ENCODE measurements at regions of chr20 and their contacts with region 1.

Region 1: DNA sequence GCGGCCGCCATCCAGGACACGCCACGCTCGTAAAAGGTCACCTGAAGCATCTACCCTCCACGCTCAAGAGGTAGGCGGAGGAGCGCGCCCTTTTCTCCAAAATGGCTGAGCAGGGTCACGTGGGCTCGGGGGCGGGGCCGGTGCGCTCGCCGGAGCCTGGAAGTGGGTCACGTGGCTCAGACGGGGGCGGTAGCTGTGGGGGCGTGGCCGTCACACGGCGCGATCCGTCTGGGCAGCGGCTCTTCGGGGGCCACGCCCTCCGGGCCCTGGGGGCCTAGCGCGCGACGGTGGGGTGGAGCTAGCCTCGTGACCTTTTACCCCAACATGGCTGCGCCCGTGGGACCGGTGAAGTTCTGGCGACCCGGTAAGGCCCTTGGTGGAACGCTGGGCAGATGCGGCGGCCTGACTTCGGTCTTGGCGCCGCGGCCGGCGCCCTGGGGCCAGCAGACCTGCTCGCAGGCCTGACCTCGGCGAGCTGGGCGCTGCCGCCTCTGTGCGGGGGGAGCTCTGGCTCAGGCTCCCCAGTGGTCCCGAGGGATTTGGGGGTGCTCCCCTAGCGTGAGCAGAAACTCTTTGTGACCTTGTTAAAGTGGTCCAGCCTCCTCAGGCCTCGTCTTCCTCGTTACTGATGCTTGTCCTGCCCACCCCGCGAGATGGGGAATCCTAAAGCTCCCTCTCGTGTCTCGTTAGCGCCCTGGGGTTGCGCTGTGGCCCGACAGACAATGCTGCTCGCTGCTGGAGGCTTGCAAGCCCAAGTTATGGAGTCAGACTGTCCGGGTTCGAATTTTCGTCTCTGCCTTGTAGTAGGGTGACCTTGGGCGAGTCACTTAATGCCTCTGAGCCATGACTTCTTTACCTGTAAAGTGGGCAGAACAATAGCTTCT is at the start of gene DHX35:
- DNase-seq: peak; percentile 99
- ATAC-seq: peak; percentile 95
- H3K4me3 ChIP-seq: peak within 1 kb of the TSS; percentile 76 to 96 (median 94)
- H3K4me3 Mint-ChIP-seq: peak within 1 kb of the TSS; percentile 98
- H3K27ac ChIP-seq: peak within 1 kb of the TSS; percentile 74 to 93
- H3K27ac Mint-ChIP-seq: peak within 1 kb of the TSS; percentile 99
- H3K4me1 ChIP-seq: peaks cover 14% of the 10 kb centered on the region in 2 donors
- H3K4me1 Mint-ChIP-seq: peaks cover 20% of the 10 kb centered on the region
- H3K27me3 ChIP-seq: no peaks in the 10 kb centered on the region
- H3K27me3 Mint-ChIP-seq: no peaks in the 10 kb centered on the region
- CTCF ChIP-seq: peak; percentile 63
- total RNA-seq, gene DHX35: 7.5 and 8.4 TPM in 2 replicates

Region 2: GRCh38 chr20:37693635-37694626 is 1268.4 kb before region 1 on chr20 and contains the start of gene CTNNBL1:
- CTCF ChIA-PET with region 1: no interaction called
- POLR2A ChIA-PET with region 1: no interaction called
- intact Hi-C with region 1: loop called (anchors 10 kb)
- DNase-seq: peak; percentile 97
- ATAC-seq: peak; percentile 94
- H3K4me3 ChIP-seq: peak within 1 kb of the TSS; percentile 61 to 97 (median 67)
- H3K4me3 Mint-ChIP-seq: peak within 1 kb of the TSS; percentile 99
- H3K27ac ChIP-seq: peak within 1 kb of the TSS; percentile 7 to 75
- H3K27ac Mint-ChIP-seq: peak within 1 kb of the TSS; percentile 94
- H3K4me1 ChIP-seq: peaks cover 23 to 31% of the 10 kb centered on the region in 2 donors
- H3K4me1 Mint-ChIP-seq: peaks cover 45% of the 10 kb centered on the region
- H3K27me3 ChIP-seq: peaks cover 0 to 8% (median 6%) of the 10 kb centered on the region in 4 experiments
- H3K27me3 Mint-ChIP-seq: peaks cover 8% of the 10 kb centered on the region
- CTCF ChIP-seq: no peak
- total RNA-seq, gene CTNNBL1: 64.7 and 64.8 TPM in 2 replicates

Region 3: GRCh38 chr20:38472513-38473372 is 489.5 kb before region 1 on chr20 and contains the start of gene RALGAPB:
- CTCF ChIA-PET with region 1: no interaction called
- POLR2A ChIA-PET with region 1: no interaction called
- intact Hi-C with region 1: loop called (anchors 5 kb)
- DNase-seq: peak; percentile 98
- ATAC-seq: peak; percentile 94
- H3K4me3 ChIP-seq: peak within 1 kb of the TSS; percentile 77 to 91 (median 84)
- H3K4me3 Mint-ChIP-seq: peak within 1 kb of the TSS; percentile 92
- H3K27ac ChIP-seq: peak within 1 kb of the TSS; percentile 52 to 84
- H3K27ac Mint-ChIP-seq: peak within 1 kb of the TSS; percentile 83
- H3K4me1 ChIP-seq: peaks cover 17 to 26% of the 10 kb centered on the region in 2 donors
- H3K4me1 Mint-ChIP-seq: peaks cover 45% of the 10 kb centered on the region
- H3K27me3 ChIP-seq: no peaks in the 10 kb centered on the region
- H3K27me3 Mint-ChIP-seq: no peaks in the 10 kb centered on the region
- CTCF ChIP-seq: no peak
- total RNA-seq, gene RALGAPB: 58.3 and 63.4 TPM in 2 replicates

Region 4: DNA sequence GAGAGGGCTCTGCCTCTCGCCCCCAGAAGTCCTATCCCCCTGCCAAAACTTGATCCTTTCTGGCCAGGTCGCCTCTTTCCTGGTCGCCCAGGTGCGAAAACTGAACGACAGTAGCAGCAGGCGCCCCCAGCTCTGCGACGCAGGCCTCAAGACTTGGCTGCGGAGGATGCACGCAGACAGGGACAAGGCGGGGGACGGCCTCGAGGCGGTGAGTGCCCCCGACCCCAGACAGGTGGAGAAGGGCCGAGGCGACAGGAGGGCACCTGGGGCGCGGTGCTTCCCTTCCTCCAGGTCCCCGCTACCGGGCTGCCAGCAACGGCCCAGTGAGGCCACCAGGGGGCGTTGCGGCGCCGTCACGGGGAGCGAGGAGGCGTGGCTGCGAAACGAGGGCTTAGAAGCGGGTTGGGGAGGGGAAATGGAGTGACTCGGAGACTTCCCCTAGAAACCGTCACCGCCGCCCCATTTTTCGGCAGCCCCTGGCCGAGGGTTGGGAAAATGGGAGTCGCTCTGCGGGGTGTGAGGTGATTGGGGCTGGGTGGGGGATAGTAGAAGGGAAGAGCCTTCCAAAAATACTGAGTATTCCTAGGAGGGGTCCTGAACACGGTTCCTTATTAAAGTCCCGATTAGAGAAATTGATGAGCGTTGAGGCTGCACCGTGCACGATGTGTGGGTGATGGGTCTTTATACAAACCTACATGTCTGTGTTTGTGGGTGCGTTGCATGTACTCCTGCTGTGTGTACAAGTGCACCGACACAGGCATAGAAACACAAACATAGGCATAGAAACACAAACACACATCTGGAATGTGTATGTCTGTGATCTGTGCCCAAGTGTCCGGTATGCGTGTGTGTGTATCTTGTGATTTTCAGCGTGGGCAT is 316.1 kb before region 1 on chr20:
- CTCF ChIA-PET with region 1: interaction called, 20 read pairs
- POLR2A ChIA-PET with region 1: no interaction called
- intact Hi-C with region 1: loop called (anchors 1 kb)
- DNase-seq: peak; percentile 92
- ATAC-seq: peak; percentile 98
- H3K4me3 ChIP-seq: peak overlapping the region in 4 of 5 experiments; percentile 14 to 42 (median 36)
- H3K4me3 Mint-ChIP-seq: peak overlapping the region; percentile 87
- H3K27ac ChIP-seq: no peak overlapping the region
- H3K27ac Mint-ChIP-seq: no peak overlapping the region
- H3K4me1 ChIP-seq: peaks cover 12 to 13% of the 10 kb centered on the region in 2 donors
- H3K4me1 Mint-ChIP-seq: peaks cover 20% of the 10 kb centered on the region
- H3K27me3 ChIP-seq: peaks cover 0 to 46% (median 21%) of the 10 kb centered on the region in 4 experiments
- H3K27me3 Mint-ChIP-seq: peaks cover 54% of the 10 kb centered on the region
- CTCF ChIP-seq: peak; percentile 99

Region 5: DNA sequence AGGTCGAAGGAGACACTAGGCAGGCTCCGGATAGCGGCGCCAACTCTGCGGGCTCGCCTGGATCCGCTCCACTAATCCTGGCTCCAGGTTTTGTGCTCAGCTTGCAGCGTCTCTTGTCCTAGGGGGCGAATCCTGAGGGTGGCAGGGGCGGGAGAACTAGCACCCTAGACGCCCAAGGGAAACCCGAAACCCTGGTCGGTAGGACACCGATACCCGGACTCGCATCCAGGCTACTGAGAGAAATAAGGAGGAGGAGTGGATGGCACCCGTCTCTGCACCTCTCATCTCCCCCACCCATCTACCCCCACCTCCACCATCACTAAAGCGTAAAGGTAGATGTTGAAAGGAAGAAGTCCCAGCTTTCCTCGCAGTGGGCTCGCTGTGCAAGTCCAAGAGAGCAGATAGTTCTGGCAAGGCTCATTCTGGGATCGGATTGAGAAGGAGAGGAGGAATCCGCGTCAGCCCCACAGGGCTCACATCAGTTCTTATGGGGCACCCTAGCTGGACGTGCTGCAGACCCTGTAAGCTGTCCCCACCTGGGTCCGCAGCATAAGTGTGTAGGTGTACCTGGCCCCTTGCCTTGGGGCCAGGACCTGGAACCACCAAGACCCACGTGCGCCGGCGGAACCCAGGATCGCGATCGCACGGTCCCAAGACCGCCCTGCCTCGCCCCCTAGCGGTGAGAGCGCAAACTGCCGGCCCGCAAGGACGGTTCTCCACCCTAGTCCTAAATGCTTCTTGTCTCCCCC is 231.1 kb before region 1 on chr20:
- CTCF ChIA-PET with region 1: interaction called, 8 read pairs
- POLR2A ChIA-PET with region 1: interaction called, 5 read pairs
- intact Hi-C with region 1: loop called (anchors 5 kb)
- DNase-seq: peak; percentile 81
- ATAC-seq: peak; percentile 76
- H3K4me3 ChIP-seq: peak overlapping the region in 4 of 5 experiments; percentile 18 to 40 (median 28)
- H3K4me3 Mint-ChIP-seq: peak overlapping the region; percentile 69
- H3K27ac ChIP-seq: no peak overlapping the region
- H3K27ac Mint-ChIP-seq: peak overlapping the region; percentile 77
- H3K4me1 ChIP-seq: peaks cover 59 to 74% of the 10 kb centered on the region in 2 donors
- H3K4me1 Mint-ChIP-seq: peaks cover 51% of the 10 kb centered on the region
- H3K27me3 ChIP-seq: peaks cover 0 to 97% (median 86%) of the 10 kb centered on the region in 4 experiments
- H3K27me3 Mint-ChIP-seq: peaks cover 89% of the 10 kb centered on the region
- CTCF ChIP-seq: peak; percentile 97

Region 6: DNA sequence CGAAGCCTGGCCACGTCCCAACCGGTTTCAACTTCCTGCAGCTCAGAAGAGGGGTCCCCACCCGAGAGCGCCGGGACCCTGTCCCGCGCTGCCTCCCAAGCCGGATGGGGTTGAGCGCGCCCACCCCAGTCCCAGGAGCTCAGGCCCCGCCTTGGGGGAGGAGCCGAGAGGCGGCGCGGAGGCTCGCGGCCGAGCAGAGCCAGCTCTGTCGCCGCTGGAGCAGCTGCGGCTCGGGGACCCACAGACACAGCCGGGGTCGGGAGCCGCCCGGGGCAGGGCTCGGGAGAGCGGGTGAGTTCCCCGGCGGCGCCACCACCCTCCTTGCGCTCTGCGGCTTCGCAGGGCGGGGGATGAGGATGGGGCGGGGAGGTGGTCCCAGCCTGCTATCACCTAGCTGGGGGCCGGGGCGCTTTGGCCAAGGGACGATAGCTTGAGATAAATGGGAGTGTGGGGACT is 156.8 kb before region 1 on chr20 and contains the start of gene PPP1R16B:
- CTCF ChIA-PET with region 1: interaction called, 3 read pairs
- POLR2A ChIA-PET with region 1: interaction called, 10 read pairs
- intact Hi-C with region 1: loop called (anchors 1 kb)
- DNase-seq: peak; percentile 85
- ATAC-seq: peak; percentile 75
- H3K4me3 ChIP-seq: peak within 1 kb of the TSS; percentile 17 to 99 (median 95)
- H3K4me3 Mint-ChIP-seq: peak within 1 kb of the TSS; percentile 95
- H3K27ac ChIP-seq: peak within 1 kb of the TSS; percentile 99
- H3K27ac Mint-ChIP-seq: peak within 1 kb of the TSS; percentile 96
- H3K4me1 ChIP-seq: peaks cover 49 to 55% of the 10 kb centered on the region in 2 donors
- H3K4me1 Mint-ChIP-seq: peaks cover 53% of the 10 kb centered on the region
- H3K27me3 ChIP-seq: no peaks in the 10 kb centered on the region
- H3K27me3 Mint-ChIP-seq: no peaks in the 10 kb centered on the region
- CTCF ChIP-seq: no peak
- total RNA-seq, gene PPP1R16B: 108 and 112 TPM in 2 replicates

Region 7: GRCh38 chr20:38833857-38834164 is 128.5 kb before region 1 on chr20:
- CTCF ChIA-PET with region 1: no interaction called
- POLR2A ChIA-PET with region 1: no interaction called
- intact Hi-C with region 1: no loop called
- DNase-seq: peak; percentile 55
- ATAC-seq: peak; percentile 61
- H3K4me3 ChIP-seq: no peak overlapping the region
- H3K4me3 Mint-ChIP-seq: peak overlapping the region; percentile 59
- H3K27ac ChIP-seq: peak overlapping the region; percentile 42 to 73
- H3K27ac Mint-ChIP-seq: peak overlapping the region; percentile 84
- H3K4me1 ChIP-seq: peaks cover 52 to 76% of the 10 kb centered on the region in 2 donors
- H3K4me1 Mint-ChIP-seq: peaks cover 72% of the 10 kb centered on the region
- H3K27me3 ChIP-seq: no peaks in the 10 kb centered on the region
- H3K27me3 Mint-ChIP-seq: no peaks in the 10 kb centered on the region
- CTCF ChIP-seq: no peak

Region 8: GRCh38 chr20:38926142-38926933 is 35.9 kb before region 1 on chr20 and contains the start of gene FAM83D:
- CTCF ChIA-PET with region 1: interaction called, 11 read pairs
- POLR2A ChIA-PET with region 1: interaction called, 6 read pairs
- intact Hi-C with region 1: loop called (anchors 1 kb)
- DNase-seq: peak; percentile 95
- ATAC-seq: peak; percentile 96
- H3K4me3 ChIP-seq: peak within 1 kb of the TSS; percentile 31 to 73 (median 59)
- H3K4me3 Mint-ChIP-seq: peak within 1 kb of the TSS; percentile 82
- H3K27ac ChIP-seq: peak within 1 kb of the TSS in 1 of 2 donors; percentile 49
- H3K27ac Mint-ChIP-seq: peak within 1 kb of the TSS; percentile 75
- H3K4me1 ChIP-seq: peaks cover 6 to 18% of the 10 kb centered on the region in 2 donors
- H3K4me1 Mint-ChIP-seq: peaks cover 27% of the 10 kb centered on the region
- H3K27me3 ChIP-seq: peaks cover 0 to 3% (median 1%) of the 10 kb centered on the region in 4 experiments
- H3K27me3 Mint-ChIP-seq: no peaks in the 10 kb centered on the region
- CTCF ChIP-seq: peak; percentile 34
- total RNA-seq, gene FAM83D: 1.7 and 2.0 TPM in 2 replicates

Measured in B cell (primary cell).